ENCODE measurements at regions of chr5 and their contacts with region 1.

Region 1: DNA sequence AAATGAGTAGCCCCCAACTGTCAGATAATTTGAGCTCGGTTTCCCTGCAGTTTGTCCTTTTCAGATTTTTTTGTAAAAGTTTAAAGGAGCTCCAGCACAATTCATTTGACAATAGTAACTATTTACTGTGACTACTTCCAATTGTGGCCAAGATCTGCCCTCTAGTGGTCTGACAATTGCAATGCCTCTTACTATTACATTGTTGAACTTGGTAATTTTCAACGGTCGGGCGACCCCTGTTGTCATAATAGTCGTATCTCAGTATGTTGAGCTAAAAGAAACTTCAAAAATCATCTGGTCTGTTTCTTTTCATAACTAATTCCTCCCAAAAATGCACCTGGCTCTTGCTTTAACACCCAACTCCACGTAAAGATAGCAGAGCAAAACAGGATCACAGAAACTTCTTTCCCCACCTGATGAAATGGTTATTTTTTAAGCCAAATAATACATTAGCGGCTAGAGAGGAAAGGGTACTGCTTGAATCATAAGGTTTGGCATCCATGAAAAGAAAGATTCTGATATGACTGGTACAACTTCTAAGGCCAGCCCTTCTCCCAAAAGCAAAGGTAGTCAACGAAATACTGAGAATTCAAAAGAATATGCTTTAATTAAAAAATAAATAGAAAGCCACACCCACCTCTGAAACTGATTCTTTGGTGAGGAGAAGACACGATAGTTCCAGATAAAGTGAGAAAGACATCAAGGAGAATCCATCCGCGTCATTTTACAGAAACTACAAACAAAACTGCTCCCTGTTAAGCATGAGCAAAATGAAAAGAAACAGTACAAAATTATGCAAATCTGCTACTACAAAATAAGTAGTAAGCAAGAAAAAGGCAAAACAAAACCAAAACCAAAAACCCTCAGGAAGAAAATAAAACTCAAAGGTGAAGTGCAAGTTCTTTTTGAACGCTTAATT is 76.9 kb upstream of the HTR4 start:
- DNase-seq: peak; percentile 89
- ATAC-seq: peak; percentile 95
- H3K4me3 Mint-ChIP-seq: peak overlapping the region; percentile 20
- H3K27ac Mint-ChIP-seq: peak overlapping the region; percentile 30
- H3K4me1 Mint-ChIP-seq: peaks cover 2% of the 10 kb centered on the region
- H3K27me3 Mint-ChIP-seq: peaks cover 5% of the 10 kb centered on the region
- CTCF ChIP-seq: peak; percentile 98

Region 2: DNA sequence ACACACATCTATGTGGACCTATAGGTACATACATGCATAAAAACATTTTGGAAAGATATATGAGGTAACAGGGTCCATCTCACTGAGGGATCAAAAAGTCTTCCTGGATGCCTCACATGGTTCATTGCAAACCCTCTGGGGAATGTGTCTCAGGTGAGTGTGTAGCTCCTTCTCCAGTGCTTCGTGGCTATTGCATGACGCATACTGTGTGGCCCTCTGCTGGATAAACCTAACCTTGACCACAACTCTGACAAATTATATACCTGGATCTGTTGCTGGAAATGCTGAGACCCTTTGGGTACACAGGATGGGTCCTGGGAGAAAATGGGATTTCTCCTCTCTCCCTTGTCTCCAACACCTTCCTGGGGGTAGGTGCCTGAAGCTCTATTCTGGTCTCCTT is 1040.6 kb before region 1 on chr5:
- CTCF ChIA-PET with region 1: no interaction called
- POLR2A ChIA-PET with region 1: no interaction called
- intact Hi-C with region 1: no loop called
- DNase-seq: no peak
- ATAC-seq: no peak
- H3K4me3 Mint-ChIP-seq: no peak overlapping the region
- H3K27ac Mint-ChIP-seq: no peak overlapping the region
- H3K4me1 Mint-ChIP-seq: no peaks in the 10 kb centered on the region
- H3K27me3 Mint-ChIP-seq: no peaks in the 10 kb centered on the region
- CTCF ChIP-seq: no peak

Region 3: GRCh38 chr5:147949711-147950573 is 781.3 kb before region 1 on chr5:
- CTCF ChIA-PET with region 1: interaction called, 8 read pairs
- POLR2A ChIA-PET with region 1: interaction called, 3 read pairs
- intact Hi-C with region 1: loop called (anchors 2 kb)
- DNase-seq: no peak
- ATAC-seq: no peak
- H3K4me3 Mint-ChIP-seq: no peak overlapping the region
- H3K27ac Mint-ChIP-seq: no peak overlapping the region
- H3K4me1 Mint-ChIP-seq: no peaks in the 10 kb centered on the region
- H3K27me3 Mint-ChIP-seq: peaks cover 3% of the 10 kb centered on the region
- CTCF ChIP-seq: peak; percentile 68

Region 4: GRCh38 chr5:148437249-148437648 is 294.0 kb before region 1 on chr5:
- CTCF ChIA-PET with region 1: interaction called, 214 read pairs
- POLR2A ChIA-PET with region 1: no interaction called
- intact Hi-C with region 1: no loop called
- DNase-seq: peak; percentile 35
- ATAC-seq: peak; percentile 85
- H3K4me3 Mint-ChIP-seq: peak overlapping the region; percentile 57
- H3K27ac Mint-ChIP-seq: peak overlapping the region; percentile 98
- H3K4me1 Mint-ChIP-seq: peaks cover 7% of the 10 kb centered on the region
- H3K27me3 Mint-ChIP-seq: no peaks in the 10 kb centered on the region
- CTCF ChIP-seq: no peak

Region 5: GRCh38 chr5:148569948-148570347 is 161.3 kb before region 1 on chr5:
- CTCF ChIA-PET with region 1: interaction called, 12 read pairs
- POLR2A ChIA-PET with region 1: no interaction called
- intact Hi-C with region 1: no loop called
- DNase-seq: no peak
- ATAC-seq: no peak
- H3K4me3 Mint-ChIP-seq: no peak overlapping the region
- H3K27ac Mint-ChIP-seq: no peak overlapping the region
- H3K4me1 Mint-ChIP-seq: no peaks in the 10 kb centered on the region
- H3K27me3 Mint-ChIP-seq: peaks cover 17% of the 10 kb centered on the region
- CTCF ChIP-seq: no peak

Region 6: GRCh38 chr5:148719605-148720004 is 11.6 kb before region 1 on chr5:
- CTCF ChIA-PET with region 1: interaction called, 65 read pairs
- POLR2A ChIA-PET with region 1: no interaction called
- intact Hi-C with region 1: no loop called
- DNase-seq: no peak
- ATAC-seq: no peak
- H3K4me3 Mint-ChIP-seq: no peak overlapping the region
- H3K27ac Mint-ChIP-seq: no peak overlapping the region
- H3K4me1 Mint-ChIP-seq: peaks cover 7% of the 10 kb centered on the region
- H3K27me3 Mint-ChIP-seq: peaks cover 49% of the 10 kb centered on the region
- CTCF ChIP-seq: no peak

Region 7: GRCh38 chr5:148910686-148911361 is 179.6 kb after region 1 on chr5:
- CTCF ChIA-PET with region 1: no interaction called
- POLR2A ChIA-PET with region 1: no interaction called
- intact Hi-C with region 1: no loop called
- DNase-seq: no peak
- ATAC-seq: no peak
- H3K4me3 Mint-ChIP-seq: no peak overlapping the region
- H3K27ac Mint-ChIP-seq: no peak overlapping the region
- H3K4me1 Mint-ChIP-seq: peaks cover 13% of the 10 kb centered on the region
- H3K27me3 Mint-ChIP-seq: peaks cover 1% of the 10 kb centered on the region
- CTCF ChIP-seq: no peak

Region 8: GRCh38 chr5:148979104-148979723 is 248.0 kb after region 1 on chr5:
- CTCF ChIA-PET with region 1: interaction called, 10 read pairs
- POLR2A ChIA-PET with region 1: no interaction called
- intact Hi-C with region 1: no loop called
- DNase-seq: no peak
- ATAC-seq: no peak
- H3K4me3 Mint-ChIP-seq: no peak overlapping the region
- H3K27ac Mint-ChIP-seq: no peak overlapping the region
- H3K4me1 Mint-ChIP-seq: no peaks in the 10 kb centered on the region
- H3K27me3 Mint-ChIP-seq: peaks cover 7% of the 10 kb centered on the region
- CTCF ChIP-seq: no peak